Breast epithelium (tissue), 4 donors: ENCODE measurements at regions of chr6 and their contacts with region 1.

Region 1: DNA sequence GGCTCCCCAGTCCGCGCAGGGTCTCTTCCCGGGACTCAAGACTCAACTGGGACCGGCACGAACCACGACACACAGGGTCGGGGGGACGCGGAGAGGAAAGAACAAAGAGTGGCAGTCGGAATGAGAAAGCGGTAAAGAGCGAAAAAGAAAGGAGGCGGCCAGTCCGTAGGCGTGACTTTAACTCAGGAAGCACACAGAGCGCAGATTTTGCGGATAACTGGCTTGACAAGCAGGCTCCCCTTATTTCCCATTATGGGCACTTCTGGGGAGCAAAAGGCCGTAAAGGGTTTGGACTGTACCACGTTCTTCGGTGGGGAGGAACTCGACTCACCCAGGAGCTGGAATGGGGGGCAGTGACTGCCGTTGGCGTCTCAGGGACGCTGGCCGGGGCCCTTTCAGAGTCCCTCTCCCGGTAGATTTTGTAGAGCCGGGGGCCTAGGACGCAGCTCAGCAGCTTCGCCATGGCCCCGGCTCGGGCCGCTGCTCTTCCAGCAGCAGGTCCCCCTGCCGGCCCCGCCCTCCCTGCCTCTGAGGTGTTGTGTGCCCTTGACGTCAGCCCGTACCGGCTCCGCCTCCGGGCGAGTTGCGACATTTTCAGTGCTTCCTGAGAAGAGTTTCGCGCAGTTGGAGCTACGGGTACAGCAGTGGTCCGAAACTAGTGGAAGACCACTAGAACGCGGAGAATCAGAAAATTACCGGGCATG is at the start of gene ABHD16A:
- DNase-seq: peak; percentile 99
- H3K4me3 ChIP-seq: peak within 1 kb of the TSS; percentile 79 to 90 (median 86)
- H3K27ac ChIP-seq: peak within 1 kb of the TSS; percentile 98 to 99
- H3K4me1 ChIP-seq: peaks cover 4 to 17% of the 10 kb centered on the region in 2 donors
- H3K27me3 ChIP-seq: no peaks in the 10 kb centered on the region
- CTCF ChIP-seq: peak in 2 of 3 donors; percentile 14 to 26
- POLR2A ChIP-seq: peak; percentile 96
- total RNA-seq, gene ABHD16A: 42.6 to 62.6 (median 50.5) TPM

Region 2: GRCh38 chr6:31025595-31025994 is 677.4 kb before region 1 on chr6:
- intact Hi-C with region 1: no loop called
- DNase-seq: no peak
- H3K4me3 ChIP-seq: no peak overlapping the region
- H3K27ac ChIP-seq: no peak overlapping the region
- H3K4me1 ChIP-seq: no peaks in the 10 kb centered on the region
- H3K27me3 ChIP-seq: no peaks in the 10 kb centered on the region
- CTCF ChIP-seq: no peak
- POLR2A ChIP-seq: no peak

Region 3: DNA sequence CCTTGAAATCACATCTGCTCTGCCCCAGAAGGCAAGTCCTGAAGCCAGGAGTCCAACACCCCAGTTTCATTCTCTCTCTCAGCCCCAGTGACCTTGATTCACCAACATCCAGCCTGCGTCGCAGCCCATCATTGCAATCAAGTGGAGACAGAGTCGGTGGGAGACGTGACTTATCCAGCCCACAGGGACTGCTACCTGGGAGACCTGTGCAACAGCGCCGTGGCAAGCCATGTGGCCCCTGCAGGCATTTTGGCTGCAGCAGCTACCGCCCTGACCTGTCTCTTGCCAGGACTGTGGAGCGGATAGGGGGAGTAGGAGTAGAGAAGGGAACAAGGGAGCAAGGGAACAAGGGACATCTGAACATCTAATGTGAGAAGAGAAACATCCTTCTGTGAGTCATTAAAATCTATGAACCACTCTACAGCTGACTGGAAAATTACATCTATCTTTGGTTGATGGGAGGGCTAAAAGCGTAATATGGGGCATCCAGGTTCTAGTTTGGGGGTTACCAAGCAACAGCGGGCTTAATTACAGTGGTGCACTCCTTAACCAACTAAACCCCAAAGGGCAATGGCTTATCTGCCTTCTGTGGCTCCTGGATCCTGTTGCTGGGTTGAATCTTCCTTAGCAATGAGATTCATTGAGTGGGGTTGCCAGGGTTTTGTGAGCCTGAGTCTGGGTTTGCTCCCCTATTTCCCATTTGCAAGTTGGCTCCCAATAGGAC is 14.7 kb after region 1 on chr6:
- intact Hi-C with region 1: loop called (anchors 1 kb)
- DNase-seq: peak; percentile 63 to 84
- H3K4me3 ChIP-seq: peak overlapping the region in 1 of 3 donors; percentile 17
- H3K27ac ChIP-seq: peak overlapping the region; percentile 87 to 88
- H3K4me1 ChIP-seq: peaks cover 3 to 6% of the 10 kb centered on the region in 2 donors
- H3K27me3 ChIP-seq: no peaks in the 10 kb centered on the region
- CTCF ChIP-seq: peak in 1 of 3 donors; percentile 33
- POLR2A ChIP-seq: no peak

Region 4: DNA sequence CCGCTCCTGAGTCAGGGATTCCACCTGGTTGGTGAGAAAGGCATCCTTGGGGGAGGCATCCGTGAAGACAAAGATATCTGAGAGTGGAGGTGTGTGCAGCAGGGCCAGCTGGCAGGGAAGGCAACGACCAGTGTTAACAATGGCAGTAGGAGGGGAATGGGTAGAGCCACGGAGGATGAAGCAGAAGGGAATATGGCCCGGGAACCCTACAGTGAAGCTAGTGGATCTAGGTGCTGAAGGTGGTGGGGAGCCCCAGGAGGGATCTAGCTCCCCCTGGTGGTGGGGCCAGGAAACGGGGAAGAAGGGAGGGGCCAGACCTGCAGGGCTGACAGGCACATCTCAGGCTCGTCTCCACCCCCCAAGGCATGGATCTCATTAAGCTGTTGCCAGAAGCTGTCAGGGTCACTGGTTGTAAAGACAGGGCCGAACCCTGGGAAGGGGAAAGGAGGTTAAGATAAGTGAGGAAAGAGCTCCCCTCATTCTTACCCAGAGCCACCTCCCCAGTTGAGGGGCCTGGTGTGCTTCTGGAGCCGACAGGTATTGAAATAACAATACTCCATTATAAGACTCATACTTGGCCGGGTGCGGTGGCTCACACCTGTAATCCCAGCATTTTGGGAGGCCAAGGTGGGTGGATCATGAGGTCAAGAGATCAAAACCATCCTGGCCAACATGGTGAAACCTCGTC is 66.9 kb after region 1 on chr6:
- intact Hi-C with region 1: loop called (anchors 10 kb)
- DNase-seq: peak; percentile 57 to 77
- H3K4me3 ChIP-seq: no peak overlapping the region
- H3K27ac ChIP-seq: no peak overlapping the region
- H3K4me1 ChIP-seq: no peaks in the 10 kb centered on the region
- H3K27me3 ChIP-seq: no peaks in the 10 kb centered on the region
- CTCF ChIP-seq: peak; percentile 25 to 69 (median 60)
- POLR2A ChIP-seq: no peak